ENCODE measurements at regions of chr10 and their contacts with region 1.

Region 1: GRCh38 chr10:69639291-69640195 is 9.5 kb downstream of the FAM241B start:
- DNase-seq: peak in 4 of 5 donors; percentile 74 to 88 (median 80)
- H3K4me3 ChIP-seq: no peak overlapping the region
- H3K27ac ChIP-seq: no peak overlapping the region
- H3K4me1 ChIP-seq: no peaks in the 10 kb centered on the region
- H3K27me3 ChIP-seq: no peaks in the 10 kb centered on the region
- CTCF ChIP-seq: peak; percentile 74

Region 2: DNA sequence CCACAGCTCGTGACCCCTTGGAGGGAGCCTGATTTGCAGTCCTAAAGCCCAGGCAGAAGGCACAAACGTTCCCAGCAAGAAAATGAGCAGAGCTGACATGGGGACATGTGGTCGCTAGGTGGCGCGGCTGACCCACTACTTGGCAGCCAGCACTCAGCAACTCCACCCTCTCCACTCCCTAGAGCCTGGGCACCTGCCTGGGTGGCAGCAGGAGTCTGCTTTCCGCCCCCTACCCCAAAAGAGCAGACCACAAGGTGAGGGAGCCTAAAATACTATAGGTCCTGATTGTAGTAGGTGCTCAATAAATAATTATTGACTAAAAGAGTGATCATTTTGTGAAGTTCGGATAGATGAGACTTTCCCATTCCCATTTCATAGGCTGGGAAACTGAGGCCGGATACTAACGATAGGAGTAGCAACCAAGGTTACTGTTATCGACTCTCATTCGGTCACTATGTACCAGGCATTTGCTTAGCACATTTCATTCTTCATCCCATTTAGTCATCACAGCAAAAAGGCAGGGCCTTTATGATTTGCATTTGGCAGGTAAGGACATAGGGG is 123.8 kb before region 1 on chr10:
- intact Hi-C with region 1: loop called (anchors 5 kb)
- DNase-seq: peak; percentile 72 to 83 (median 81)
- H3K4me3 ChIP-seq: no peak overlapping the region
- H3K27ac ChIP-seq: no peak overlapping the region
- H3K4me1 ChIP-seq: no peaks in the 10 kb centered on the region
- H3K27me3 ChIP-seq: no peaks in the 10 kb centered on the region
- CTCF ChIP-seq: peak; percentile 81

Region 3: DNA sequence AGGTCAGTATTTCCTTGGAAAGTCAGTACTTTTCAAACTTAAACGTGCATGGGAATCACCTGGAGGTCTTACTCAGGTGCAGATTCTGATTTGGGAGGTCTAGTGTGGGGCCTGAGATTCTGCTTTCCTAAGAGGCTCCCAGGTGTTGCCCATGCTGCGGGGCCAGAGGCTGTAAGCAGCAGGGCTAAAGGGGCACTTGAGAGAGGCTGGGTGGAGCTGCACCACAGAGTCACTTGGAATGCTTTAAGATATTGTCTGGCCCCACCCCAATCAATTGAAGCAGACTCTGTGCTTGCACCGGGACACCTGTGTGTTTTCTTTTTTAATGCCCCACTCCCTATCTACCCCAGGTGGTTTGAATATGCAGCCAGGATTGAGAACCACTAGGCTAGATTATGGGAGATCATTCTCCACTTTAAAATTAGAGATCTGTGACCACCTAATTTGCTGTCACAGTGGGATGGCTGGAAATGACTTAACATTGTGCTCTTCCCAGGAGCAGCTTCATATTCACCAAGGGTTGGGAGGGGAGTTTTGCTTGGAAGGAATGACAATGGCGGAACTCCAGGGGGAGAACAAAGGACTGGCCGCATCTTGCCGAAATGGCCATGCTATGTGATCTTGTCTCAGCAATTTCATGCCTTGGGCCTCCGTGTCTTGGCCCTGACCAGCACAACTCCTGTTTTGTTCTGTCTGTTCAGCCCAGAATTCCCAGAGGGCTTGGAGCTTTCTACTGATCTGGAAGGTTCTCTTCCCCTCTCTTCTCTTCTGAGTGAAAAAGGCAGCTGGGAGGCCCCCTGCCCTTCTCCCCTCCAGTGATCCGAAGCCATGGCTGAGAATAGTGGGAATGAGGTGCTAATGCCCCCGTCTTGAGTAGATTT is 70.7 kb after region 1 on chr10:
- intact Hi-C with region 1: no loop called
- DNase-seq: no peak
- H3K4me3 ChIP-seq: no peak overlapping the region
- H3K27ac ChIP-seq: no peak overlapping the region
- H3K4me1 ChIP-seq: no peaks in the 10 kb centered on the region
- H3K27me3 ChIP-seq: no peaks in the 10 kb centered on the region
- CTCF ChIP-seq: no peak